Dorsolateral prefrontal cortex (tissue), 120 donors: ENCODE measurements at regions of chr3 and their contacts with region 1.

Region 1: DNA sequence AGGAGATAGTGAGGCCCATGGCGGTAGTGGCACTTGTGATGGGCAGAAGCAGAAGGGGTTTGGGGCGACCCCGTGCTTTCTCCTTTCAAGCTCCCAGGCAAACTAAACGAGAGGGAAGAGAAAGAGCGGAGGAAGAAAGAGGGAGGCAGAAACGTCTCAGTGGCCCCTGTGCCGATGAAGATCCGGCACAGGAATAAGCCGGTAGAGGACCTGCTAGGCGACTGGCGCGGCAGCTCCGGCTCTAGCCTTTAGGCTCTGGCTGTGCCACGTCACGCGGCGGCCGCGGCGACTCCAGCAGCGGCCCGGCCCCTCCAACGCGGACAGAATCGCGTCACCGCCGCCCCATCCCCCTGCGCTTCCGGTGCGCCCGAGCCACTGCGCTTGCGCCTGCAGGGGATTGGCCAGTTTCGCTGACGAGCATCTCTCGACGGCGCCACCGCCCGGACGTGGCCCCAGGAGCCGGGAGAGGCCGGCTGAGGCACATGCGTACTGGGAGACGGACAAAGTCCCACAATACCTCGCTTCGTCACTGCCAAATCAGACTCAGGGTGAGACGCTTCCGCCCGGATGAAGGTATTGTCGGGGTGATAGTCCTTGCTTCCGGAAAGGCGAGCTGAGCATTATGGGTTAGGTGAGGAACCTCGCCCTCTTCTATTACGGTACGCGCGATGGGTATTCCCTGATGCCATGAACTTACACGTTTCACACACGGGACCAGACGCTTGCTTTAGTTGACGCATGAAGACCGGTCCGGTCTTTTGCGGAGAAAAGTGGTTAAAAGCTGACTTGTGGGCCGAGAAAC is at the start of gene ARF4:
- DNase-seq: peak; percentile 96 to 99 (median 98)
- H3K4me3 ChIP-seq: peak within 1 kb of the TSS; percentile 51 to 99 (median 89)
- H3K27ac ChIP-seq: peak within 1 kb of the TSS; percentile 80 to 99 (median 95)
- H3K27me3 ChIP-seq: no peaks in the 10 kb centered on the region
- CTCF ChIP-seq: peak in 55 of 56 donors; percentile 23 to 77 (median 56)
- total RNA-seq, gene ARF4: 45.6 to 76.9 (median 61.0) TPM

Region 2: DNA sequence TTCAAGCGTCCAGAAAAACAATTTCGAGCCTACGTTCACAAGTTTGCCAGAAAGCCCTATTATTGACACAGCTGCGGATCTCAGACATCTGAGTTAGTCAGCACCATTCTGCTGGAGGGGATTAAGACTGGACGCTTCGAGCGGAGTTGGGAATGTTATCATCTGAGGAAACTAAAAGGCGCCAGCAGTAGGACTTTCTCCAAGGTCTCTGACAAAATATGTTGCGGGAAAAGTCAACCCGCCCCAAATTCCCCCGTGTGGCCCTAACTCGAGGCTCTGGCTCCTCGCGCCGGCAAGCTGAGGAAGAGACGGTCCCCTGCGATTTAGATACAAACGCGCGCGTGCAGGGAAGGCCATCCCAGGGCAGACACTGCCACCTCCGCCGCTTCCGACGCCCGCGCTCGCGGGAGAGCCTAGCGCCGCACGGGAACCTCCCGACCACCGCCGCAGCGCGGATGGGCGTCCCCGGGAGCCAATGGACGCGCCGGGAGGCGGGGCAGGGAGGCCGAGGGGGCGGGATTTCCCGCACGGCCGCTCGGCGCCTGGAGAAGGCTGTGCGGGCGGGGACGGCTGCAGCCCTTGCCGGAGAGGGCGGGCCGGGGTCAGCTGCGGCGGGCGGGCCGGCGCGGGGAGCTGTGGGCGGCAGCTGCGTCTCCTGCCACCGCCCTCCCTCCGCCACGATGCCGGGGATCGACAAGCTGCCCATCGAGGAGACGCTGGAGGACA is 370.0 kb before region 1 on chr3 and contains the start of gene APPL1:
- intact Hi-C with region 1: loop called (anchors 5 kb)
- DNase-seq: peak; percentile 83 to 98 (median 90)
- H3K4me3 ChIP-seq: peak within 1 kb of the TSS; percentile 71 to 97 (median 84)
- H3K27ac ChIP-seq: peak within 1 kb of the TSS; percentile 20 to 97 (median 89)
- H3K27me3 ChIP-seq: no peaks in the 10 kb centered on the region
- CTCF ChIP-seq: peak in 20 of 56 donors; percentile 3 to 56 (median 23)
- total RNA-seq, gene APPL1: 40.9 to 68.5 (median 56.2) TPM

Region 3: DNA sequence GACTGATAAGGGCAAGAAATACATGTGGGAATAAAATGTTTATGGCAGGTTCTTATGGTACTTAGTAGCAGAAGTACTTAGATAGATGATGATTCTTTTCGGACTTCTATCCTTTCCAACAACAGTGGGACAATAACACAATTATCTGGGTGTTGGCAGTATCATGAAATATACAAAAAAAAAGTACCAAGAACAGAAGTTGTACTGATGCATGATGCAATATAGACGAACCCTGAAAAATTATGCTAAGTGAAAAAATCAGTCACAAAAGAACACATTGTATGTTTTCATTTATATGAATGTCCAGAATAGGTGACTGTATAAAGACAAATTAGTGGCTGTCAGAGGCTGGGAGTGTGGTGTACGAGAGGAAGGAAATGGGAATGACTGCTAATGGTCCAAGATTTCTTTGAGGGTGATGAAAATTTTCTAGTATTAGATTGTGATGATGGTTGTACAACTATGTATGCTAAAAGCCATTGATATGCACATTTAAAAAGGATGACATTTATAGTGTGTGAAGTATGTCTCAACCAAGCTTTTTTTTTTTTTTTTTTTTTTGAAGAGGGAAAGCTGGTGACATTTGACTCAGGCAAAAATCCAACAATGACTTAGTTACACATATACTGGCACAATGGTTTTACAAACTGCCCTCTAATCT is 21.2 kb before region 1 on chr3:
- intact Hi-C with region 1: loop called in 1 of 2 experiments (anchors 1 kb)
- DNase-seq: no peak
- H3K4me3 ChIP-seq: peak overlapping the region in 7 of 59 donors; percentile 5 to 34 (median 9)
- H3K27ac ChIP-seq: peak overlapping the region in 53 of 59 donors; percentile 6 to 82 (median 63)
- H3K27me3 ChIP-seq: no peaks in the 10 kb centered on the region
- CTCF ChIP-seq: no peak

Region 4: DNA sequence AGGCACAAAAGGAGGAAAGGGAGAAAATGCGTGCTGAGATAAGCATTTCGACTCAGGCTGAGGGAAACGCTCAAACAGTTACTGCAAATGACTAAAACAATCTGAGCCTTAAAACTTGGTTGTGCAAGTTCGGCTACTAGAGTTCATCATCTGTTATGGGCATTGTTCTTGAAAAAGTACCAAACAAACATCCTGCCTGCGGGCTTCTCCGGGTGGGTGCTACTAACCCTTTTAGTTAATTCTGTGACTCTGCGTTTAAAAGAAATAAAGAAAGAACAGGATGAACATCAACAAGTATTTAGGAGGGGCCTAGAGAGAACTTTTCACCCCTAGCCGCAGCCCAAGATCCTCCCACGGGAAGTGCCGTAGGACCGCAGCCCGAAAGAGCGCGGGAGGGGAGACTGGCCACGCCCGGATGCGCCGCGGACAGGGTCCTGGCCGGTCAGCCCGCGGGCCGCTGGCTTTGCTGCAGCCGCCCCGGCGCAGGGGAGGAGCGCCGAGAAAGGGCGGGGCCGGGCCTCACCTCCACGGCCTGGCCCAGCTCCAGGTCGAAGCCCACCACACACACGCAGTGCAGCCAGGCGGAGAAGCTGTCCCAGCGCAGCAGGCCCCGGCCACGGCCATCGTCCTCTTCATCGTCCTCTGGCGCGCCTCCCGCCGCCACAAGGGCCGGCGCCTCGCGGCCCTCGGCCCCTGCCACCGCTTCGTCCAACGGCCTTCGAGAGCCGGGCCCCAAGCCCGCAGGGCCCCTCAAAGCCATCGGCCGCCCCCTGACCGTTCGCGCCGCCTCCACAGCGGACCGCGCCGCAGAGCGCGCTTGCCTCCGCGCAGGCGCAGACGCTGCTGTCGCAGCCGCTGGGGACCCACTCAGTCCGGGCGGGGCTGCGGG is 95.2 kb after region 1 on chr3 and contains the start of gene DENND6A:
- intact Hi-C with region 1: loop called (anchors 1 kb)
- DNase-seq: peak; percentile 23 to 97 (median 95)
- H3K4me3 ChIP-seq: peak within 1 kb of the TSS; percentile 57 to 100 (median 95)
- H3K27ac ChIP-seq: peak within 1 kb of the TSS; percentile 70 to 99 (median 97)
- H3K27me3 ChIP-seq: no peaks in the 10 kb centered on the region
- CTCF ChIP-seq: peak in 23 of 56 donors; percentile 1 to 59 (median 26)
- total RNA-seq, gene DENND6A: 13.1 to 41.8 (median 28.0) TPM

Region 5: DNA sequence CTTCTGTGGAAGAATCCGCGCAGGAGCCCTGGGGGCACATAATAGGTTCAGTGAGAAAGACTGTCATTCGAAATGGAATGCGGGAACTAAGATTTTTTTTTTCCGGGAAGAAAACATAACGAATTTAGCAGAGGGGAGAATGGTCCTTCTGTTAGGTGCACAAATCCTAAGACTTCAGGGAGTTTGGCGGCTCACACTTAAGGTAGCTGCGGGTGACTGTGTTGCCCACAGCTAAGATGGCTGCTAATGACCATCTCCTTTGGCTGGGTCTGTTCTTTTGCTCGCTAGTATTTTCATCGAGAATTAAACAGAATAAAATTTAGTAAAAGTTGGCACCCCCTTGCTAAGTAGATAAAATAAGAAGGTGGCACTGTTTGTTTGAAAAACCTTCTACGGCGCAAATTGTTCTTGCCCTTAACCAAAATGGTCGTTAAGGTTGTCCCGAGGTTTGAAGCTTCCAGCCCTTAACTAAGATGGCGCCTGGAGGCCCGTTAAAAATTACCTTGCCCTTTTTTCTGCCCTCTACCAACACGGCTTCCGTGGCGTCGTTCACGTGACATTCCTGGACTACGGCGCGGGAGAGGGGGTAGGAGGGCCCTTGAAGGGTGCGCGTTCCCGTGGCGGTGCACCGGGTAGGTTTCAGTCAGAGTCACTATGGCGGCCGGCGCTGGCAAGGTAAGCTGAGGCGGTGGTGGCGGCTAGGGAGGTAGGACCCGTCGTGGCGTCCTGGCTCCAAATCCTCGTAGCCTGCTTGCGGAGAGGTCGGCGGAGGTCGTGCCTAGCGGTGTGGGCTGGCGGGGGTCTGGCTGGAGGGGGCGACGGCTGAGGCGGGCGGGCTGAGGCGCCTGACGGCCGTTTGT is 158.6 kb after region 1 on chr3 and contains the start of gene SLMAP:
- intact Hi-C with region 1: loop called (anchors 2 kb)
- DNase-seq: peak; percentile 94 to 98 (median 97)
- H3K4me3 ChIP-seq: peak within 1 kb of the TSS; percentile 61 to 98 (median 89)
- H3K27ac ChIP-seq: peak within 1 kb of the TSS; percentile 60 to 98 (median 92)
- H3K27me3 ChIP-seq: no peaks in the 10 kb centered on the region
- CTCF ChIP-seq: peak in 18 of 56 donors; percentile 7 to 49 (median 28)
- total RNA-seq, gene SLMAP: 48.2 to 101 (median 69.5) TPM